Activated T-helper 1 cell treated with anti-CD3 and anti-CD28 coated beads, Interleukin-12 subunit alpha, Interleukin-12 subunit beta, Interleukin-2, Interleukin-4 antibody, amounts not matched to agents 30 ng/mL and 10 ng/mL and 1 ng/mL, durations not matched to agents 14 hours and 24 hours and 36 hours (primary cell): ENCODE measurements at regions of chr1 and their contacts with region 1.

Region 1: GRCh38 chr1:180168786-180169639 is 14.3 kb downstream of the QSOX1 start:
- DNase-seq: no peak
- H3K4me3 Mint-ChIP-seq: no peak overlapping the region
- H3K27ac Mint-ChIP-seq: no peak overlapping the region
- H3K4me1 Mint-ChIP-seq: peaks cover 6% of the 10 kb centered on the region
- H3K27me3 Mint-ChIP-seq: no peaks in the 10 kb centered on the region

Region 2: DNA sequence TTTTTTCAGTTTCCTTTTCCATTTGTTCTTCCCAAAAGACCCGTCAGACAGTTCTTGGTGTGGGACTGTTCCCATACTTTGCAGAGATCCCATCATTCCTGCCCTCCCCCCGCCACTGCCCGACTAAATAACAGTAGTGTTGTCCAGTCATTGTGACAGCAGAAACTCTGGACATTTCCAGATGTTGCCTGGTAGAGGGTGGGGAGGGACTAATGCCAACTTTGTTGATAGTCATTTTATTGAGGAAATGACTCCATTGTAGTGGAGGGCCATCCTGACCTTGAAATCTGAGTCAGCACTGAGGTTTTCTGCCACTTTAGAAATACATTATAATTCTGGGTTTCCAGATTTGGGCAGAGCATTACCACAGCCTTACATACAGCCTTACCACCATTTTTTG is 129.0 kb before region 1 on chr1:
- intact Hi-C with region 1: no loop called
- DNase-seq: no peak
- H3K4me3 Mint-ChIP-seq: no peak overlapping the region
- H3K27ac Mint-ChIP-seq: no peak overlapping the region
- H3K4me1 Mint-ChIP-seq: peaks cover 5% of the 10 kb centered on the region
- H3K27me3 Mint-ChIP-seq: no peaks in the 10 kb centered on the region

Region 3: GRCh38 chr1:180154325-180155181 is 14.5 kb before region 1 on chr1 and contains the start of gene QSOX1:
- intact Hi-C with region 1: loop called (anchors 1 kb)
- DNase-seq: peak; percentile 85
- H3K4me3 Mint-ChIP-seq: peak within 1 kb of the TSS; percentile 88
- H3K27ac Mint-ChIP-seq: peak within 1 kb of the TSS; percentile 94
- H3K4me1 Mint-ChIP-seq: peaks cover 44% of the 10 kb centered on the region
- H3K27me3 Mint-ChIP-seq: peaks cover 4% of the 10 kb centered on the region
- total RNA-seq, gene QSOX1: 61.4 and 63.7 TPM in 2 replicates